ENCODE measurements at regions of chr1 and their contacts with region 1.

Region 1: DNA sequence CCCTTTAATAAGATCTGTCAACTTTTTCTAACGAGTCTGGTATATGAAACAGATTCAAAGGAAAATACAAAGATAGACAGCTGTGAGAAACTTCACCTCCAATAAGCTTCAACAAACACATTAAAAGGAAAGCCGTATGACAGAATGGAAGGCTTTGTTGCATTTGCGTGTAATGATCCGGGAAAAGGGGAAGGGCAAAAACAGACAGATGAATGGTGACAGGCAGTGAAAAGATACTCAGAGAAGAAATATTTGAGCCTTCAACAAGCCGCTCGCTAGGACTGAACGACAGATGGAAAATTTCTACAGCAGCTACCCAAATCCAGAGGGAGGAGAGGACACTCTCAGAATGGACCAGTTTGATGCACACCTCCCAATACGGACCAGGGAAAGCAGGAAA is 14.9 kb downstream of the COPA start:
- DNase-seq: no peak
- H3K4me3 ChIP-seq: no peak overlapping the region
- CTCF ChIP-seq: no peak

Region 2: GRCh38 chr1:160108888-160109662 is 219.1 kb before region 1 on chr1:
- in situ Hi-C with region 1: no loop called
- DNase-seq: peak; percentile 31
- H3K4me3 ChIP-seq: no peak overlapping the region
- CTCF ChIP-seq: peak; percentile 72

Region 3: DNA sequence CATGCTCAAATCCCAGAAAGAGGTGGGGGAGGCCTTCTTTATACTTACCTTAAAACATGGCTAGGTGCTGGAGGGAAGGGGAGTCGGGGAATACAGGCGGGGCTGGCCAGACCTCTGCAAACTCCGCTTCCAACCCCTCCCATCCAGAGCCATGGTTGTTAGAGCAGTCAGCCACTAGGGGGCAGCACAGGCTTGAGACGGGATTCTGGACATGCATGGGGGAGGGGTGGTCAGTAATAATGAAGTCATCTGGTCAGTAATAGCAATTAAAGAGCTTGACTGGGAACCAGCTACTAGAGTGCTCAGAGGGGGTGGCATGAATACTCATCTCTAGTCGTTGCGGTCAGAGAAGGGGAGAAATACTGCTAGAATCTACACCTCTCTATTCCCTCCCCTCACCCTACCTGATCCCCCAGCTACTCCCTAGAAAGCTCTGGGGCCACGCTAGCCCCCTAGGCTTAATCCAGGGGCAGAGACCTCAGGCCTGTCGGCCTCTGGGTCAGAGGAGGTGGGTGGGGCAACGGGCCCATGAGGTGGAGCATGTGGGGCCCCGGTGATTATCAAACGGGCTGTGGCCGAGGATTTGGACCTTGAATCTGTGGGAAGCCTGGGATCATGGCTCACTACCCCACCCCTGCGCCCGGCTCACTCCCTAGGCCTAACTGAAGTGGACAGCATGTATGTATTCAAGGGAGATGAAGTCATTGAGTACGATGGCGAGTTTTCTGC is 134.9 kb before region 1 on chr1:
- in situ Hi-C with region 1: loop called (anchors 10 kb)
- DNase-seq: peak; percentile 79
- H3K4me3 ChIP-seq: no peak overlapping the region
- CTCF ChIP-seq: peak; percentile 90

Region 4: DNA sequence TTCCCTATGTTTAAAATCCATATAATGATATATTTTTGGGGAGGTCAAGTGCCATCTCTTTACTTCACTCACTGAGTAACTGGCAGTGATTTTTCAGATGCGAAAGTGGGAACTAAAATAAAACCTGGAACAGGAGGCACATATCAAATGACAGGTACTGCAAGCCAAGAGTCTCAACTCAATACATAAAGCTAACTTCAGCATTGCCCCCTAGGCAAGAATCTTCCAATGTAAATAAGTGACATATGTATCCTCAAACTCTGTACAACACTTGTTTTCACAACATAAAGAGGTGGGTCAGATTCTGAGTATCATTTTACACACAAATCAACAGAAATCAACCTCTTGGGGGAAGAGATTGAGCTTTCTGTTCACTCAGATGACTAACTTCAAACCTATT is 84.0 kb before region 1 on chr1:
- in situ Hi-C with region 1: no loop called
- DNase-seq: no peak
- H3K4me3 ChIP-seq: no peak overlapping the region
- CTCF ChIP-seq: no peak

Region 5: GRCh38 chr1:160277330-160277729 is 50.9 kb before region 1 on chr1:
- in situ Hi-C with region 1: loop called (anchors 5 kb)
- DNase-seq: no peak
- H3K4me3 ChIP-seq: no peak overlapping the region
- CTCF ChIP-seq: no peak